Aorta (tissue), 5 donors: ENCODE measurements at regions of chr12 and their contacts with region 1.

Region 1: GRCh38 chr12:108731105-108731865 is at the start of gene CORO1C:
- DNase-seq: peak; percentile 98 to 99
- ATAC-seq: peak; percentile 94
- H3K4me3 ChIP-seq: peak within 1 kb of the TSS; percentile 53 to 88
- H3K27ac ChIP-seq: peak within 1 kb of the TSS; percentile 88 to 93
- H3K4me1 ChIP-seq: peaks cover 0 to 4% of the 10 kb centered on the region in 2 donors
- H3K27me3 ChIP-seq: no peaks in the 10 kb centered on the region
- total RNA-seq, gene CORO1C: 207 to 387 TPM

Region 2: DNA sequence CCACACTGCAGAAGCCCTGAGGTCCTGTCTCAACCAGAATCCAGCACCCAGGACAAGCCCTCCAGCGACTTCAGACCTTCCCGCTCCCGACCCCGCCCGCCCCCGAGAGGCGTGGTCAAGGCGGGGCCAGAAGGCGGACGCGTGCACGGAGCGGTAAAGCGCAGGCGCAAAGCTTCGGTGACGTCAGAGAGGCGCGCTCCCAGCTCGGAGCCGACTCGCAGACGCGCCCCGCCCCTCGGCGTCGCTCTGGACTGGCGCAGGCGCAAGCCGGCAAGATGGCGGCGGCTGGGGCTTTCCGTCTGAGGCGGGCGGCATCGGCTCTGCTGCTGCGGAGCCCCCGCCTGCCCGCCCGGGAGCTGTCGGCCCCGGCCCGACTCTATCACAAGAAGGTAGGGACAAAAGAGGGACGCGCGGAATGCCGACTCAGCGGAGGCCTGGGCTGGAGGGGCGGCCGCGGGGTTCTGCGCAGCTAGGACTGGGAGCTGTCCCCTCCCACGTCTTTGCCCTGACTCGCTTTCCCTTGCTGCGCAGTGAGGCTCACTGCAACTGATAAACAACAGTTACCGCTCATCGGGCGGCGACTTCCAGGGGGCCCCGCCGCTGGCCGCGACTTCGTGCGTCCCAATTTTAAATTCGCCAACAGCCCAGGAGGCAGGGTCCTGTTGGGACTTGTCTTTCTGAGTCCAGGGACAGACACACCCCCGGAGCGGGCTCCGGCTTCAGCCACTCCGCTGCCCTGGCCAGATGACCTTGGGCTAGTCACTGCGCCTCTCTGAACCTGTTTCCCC is 168.7 kb before region 1 on chr12 and contains the start of gene ISCU:
- intact Hi-C with region 1: loop called in 1 of 2 experiments (anchors 5 kb)
- DNase-seq: peak; percentile 99 to 100
- ATAC-seq: peak; percentile 95
- H3K4me3 ChIP-seq: peak within 1 kb of the TSS; percentile 60 to 88
- H3K27ac ChIP-seq: peak within 1 kb of the TSS in 1 of 2 donors; percentile 87
- H3K4me1 ChIP-seq: peaks cover 0 to 9% of the 10 kb centered on the region in 2 donors
- H3K27me3 ChIP-seq: no peaks in the 10 kb centered on the region
- total RNA-seq, gene ISCU: 129 to 144 TPM

Region 3: DNA sequence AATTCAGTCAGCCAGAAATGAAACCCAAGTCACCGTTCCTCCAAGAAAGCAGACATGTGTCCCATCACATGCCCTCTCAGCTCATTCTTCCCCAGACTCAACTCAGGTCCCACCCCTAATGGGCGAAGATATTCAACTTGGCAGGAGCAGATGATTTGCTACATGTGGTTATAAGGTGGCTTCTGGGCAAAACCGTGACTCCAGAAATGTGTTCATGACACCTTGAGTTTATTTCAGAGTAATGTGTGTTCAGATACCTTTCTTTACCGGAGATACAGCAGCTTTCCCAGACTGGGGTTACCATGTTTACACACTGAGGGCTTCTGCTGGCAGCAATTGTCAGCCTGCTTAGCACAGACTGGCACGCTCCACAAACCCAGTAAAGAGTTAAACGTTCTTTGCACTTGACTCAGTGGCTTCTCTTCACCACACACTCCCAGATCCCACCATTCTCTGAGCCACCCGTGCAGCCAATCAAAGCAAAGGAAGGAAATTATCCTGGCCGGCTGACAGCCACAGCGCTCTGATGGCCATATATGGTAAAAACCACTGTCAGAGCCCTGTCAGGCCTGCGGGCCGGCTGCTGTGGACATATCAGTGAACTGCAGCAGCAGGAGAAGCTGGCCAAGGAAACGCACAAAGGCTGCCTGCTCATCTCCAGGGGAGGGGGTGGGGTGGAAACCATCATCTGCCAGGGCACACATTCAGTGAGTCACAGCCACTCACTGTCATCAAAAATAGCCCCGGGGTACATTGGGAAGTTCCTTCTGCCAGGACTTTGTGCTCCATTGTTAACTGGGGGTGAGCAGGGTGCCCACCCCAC is 39.9 kb before region 1 on chr12:
- intact Hi-C with region 1: loop called (anchors 5 kb)
- DNase-seq: peak; percentile 96 to 97
- ATAC-seq: peak; percentile 94
- H3K4me3 ChIP-seq: no peak overlapping the region
- H3K27ac ChIP-seq: peak overlapping the region; percentile 87 to 100
- H3K4me1 ChIP-seq: peaks cover 5 to 8% of the 10 kb centered on the region in 2 donors
- H3K27me3 ChIP-seq: no peaks in the 10 kb centered on the region

Region 4: GRCh38 chr12:108803428-108804105 is 72.3 kb after region 1 on chr12:
- intact Hi-C with region 1: loop called (anchors 2 kb)
- DNase-seq: peak; percentile 79 to 81
- ATAC-seq: peak; percentile 92
- H3K4me3 ChIP-seq: no peak overlapping the region
- H3K27ac ChIP-seq: peak overlapping the region; percentile 74 to 98
- H3K4me1 ChIP-seq: peaks cover 0 to 5% of the 10 kb centered on the region in 2 donors
- H3K27me3 ChIP-seq: no peaks in the 10 kb centered on the region

Region 5: GRCh38 chr12:108856428-108857157 is 125.3 kb after region 1 on chr12:
- intact Hi-C with region 1: loop called (anchors 2 to 5 kb)
- DNase-seq: peak; percentile 88 to 90
- ATAC-seq: peak; percentile 42
- H3K4me3 ChIP-seq: peak overlapping the region; percentile 79 to 87
- H3K27ac ChIP-seq: peak overlapping the region; percentile 83 to 94
- H3K4me1 ChIP-seq: peaks cover 0 to 3% of the 10 kb centered on the region in 2 donors
- H3K27me3 ChIP-seq: no peaks in the 10 kb centered on the region